ENCODE measurements at regions of chr12 and their contacts with region 1.

Region 1: GRCh38 chr12:19186722-19187661 is 57.5 kb downstream of the PLEKHA5 start:
- DNase-seq: no peak
- H3K4me3 ChIP-seq: peak overlapping the region in 40 of 59 donors; percentile 5 to 57 (median 36)
- H3K27ac ChIP-seq: peak overlapping the region in 13 of 59 donors; percentile 0 to 56 (median 34)
- H3K27me3 ChIP-seq: no peaks in the 10 kb centered on the region
- CTCF ChIP-seq: peak; percentile 60 to 85 (median 77)

Region 2: GRCh38 chr12:18250313-18250916 is 936.6 kb before region 1 on chr12:
- intact Hi-C with region 1: loop called in 1 of 2 experiments (anchors 5 kb)
- DNase-seq: peak in 1 of 10 donors; percentile 4
- H3K4me3 ChIP-seq: no peak overlapping the region
- H3K27ac ChIP-seq: no peak overlapping the region
- H3K27me3 ChIP-seq: no peaks in the 10 kb centered on the region
- CTCF ChIP-seq: peak; percentile 59 to 88 (median 77)

Region 3: DNA sequence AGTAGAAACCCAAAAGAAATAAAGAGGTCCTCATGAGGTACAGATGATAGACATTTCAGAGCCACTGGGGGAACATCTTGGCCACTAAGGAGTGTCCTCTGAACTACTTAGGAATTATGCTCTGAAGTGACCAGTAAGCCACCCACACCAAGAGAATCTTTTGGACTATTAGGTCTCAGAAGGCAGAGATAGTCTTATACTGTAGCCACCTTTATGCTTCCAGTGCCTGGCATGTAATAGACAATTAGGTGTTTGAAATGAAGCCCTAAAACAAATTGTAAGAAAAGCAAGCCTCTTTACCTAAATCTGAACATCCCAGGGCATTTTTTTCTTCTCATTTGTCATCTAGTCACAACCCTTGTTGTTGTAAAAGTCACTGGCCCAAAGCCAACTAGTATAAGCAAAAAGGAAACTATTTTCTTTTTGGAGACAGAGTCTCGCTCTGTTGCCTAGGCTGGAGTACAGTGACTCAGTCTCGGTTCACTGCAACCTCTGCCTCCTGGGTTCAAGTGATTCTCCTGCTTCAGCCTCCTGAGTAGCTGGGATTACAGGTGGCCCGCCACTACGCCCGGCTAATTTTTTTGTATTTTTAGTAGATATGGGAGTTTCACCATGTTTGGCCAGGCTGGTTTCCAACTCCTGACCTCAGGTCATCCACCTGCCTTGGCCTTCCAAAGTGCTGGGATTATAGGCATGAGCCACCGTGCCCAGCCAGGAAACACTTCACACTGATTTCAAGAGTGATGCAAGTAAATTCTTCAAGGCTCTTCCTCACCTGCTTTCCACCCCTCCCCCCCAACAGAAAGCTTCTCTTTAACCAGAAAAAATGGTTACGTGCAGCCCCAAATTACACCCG is 46.4 kb before region 1 on chr12:
- intact Hi-C with region 1: no loop called
- DNase-seq: no peak
- H3K4me3 ChIP-seq: no peak overlapping the region
- H3K27ac ChIP-seq: no peak overlapping the region
- H3K27me3 ChIP-seq: no peaks in the 10 kb centered on the region
- CTCF ChIP-seq: no peak

Region 4: GRCh38 chr12:19236656-19237055 is 49.7 kb after region 1 on chr12:
- intact Hi-C with region 1: loop called (anchors 10 kb)
- DNase-seq: peak in 3 of 10 donors; percentile 43 to 61 (median 48)
- H3K4me3 ChIP-seq: peak overlapping the region in 48 of 59 donors; percentile 2 to 53 (median 37)
- H3K27ac ChIP-seq: peak overlapping the region in 29 of 59 donors; percentile 1 to 87 (median 32)
- H3K27me3 ChIP-seq: no peaks in the 10 kb centered on the region
- CTCF ChIP-seq: no peak

Region 5: GRCh38 chr12:19288603-19289244 is 101.7 kb after region 1 on chr12:
- intact Hi-C with region 1: loop called (anchors 5 to 10 kb)
- DNase-seq: no peak
- H3K4me3 ChIP-seq: no peak overlapping the region
- H3K27ac ChIP-seq: no peak overlapping the region
- H3K27me3 ChIP-seq: no peaks in the 10 kb centered on the region
- CTCF ChIP-seq: peak; percentile 49 to 85 (median 69)

Region 6: GRCh38 chr12:19643635-19644034 is 456.6 kb after region 1 on chr12:
- intact Hi-C with region 1: loop called in 1 of 2 experiments (anchors 5 kb)
- DNase-seq: no peak
- H3K4me3 ChIP-seq: no peak overlapping the region
- H3K27ac ChIP-seq: no peak overlapping the region
- H3K27me3 ChIP-seq: no peaks in the 10 kb centered on the region
- CTCF ChIP-seq: peak in 54 of 56 donors; percentile 35 to 76 (median 58)